ENCODE measurements at regions of chr11 and their contacts with region 1.

Region 1: DNA sequence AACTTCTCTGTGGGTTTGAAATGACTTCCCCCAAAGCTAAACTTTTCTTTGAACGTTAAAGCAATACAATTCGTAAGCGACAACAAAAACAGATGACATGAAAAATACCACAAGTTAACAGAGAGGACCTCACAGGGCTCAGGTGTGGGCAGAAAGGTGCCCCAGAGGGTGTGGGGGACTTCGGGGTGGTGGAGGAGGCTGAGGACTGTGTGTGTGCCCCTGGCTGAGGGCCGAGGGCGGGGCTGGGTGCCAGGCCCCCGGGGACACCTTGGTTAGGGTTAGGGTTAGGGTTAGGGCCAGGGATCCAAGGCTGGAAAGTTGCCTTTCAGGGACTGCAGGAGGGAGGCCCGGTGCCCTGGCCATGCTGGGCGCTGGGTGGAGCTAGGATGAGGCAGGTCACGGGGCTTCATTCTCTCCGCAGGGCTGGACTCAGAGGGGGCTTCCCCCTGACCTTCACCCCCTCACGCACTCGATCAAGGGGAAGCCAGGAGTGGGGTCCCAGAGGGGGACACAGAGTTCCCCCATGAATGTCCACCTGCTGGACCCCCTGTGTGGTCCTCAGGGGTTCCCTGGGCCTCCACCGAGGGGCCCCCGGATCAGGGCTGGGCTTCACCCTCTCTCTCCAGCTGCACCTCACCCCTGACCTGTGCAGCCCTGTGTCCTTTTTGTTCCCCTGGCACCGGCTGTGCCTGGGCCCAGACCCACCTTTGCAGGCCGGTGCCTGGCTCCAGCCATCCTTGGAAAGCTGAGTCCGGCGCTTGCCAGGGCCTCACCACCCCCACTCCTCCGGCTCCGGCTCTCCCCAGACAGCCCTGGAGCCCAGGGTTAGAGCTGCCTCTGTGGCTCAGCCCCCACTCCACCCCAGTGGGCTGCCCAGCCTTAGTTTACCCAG is 7.0 kb downstream of the TNNI2 start:
- DNase-seq: no peak
- CTCF ChIP-seq: no peak

Region 2: GRCh38 chr11:1782831-1783724 is 62.7 kb before region 1 on chr11:
- CTCF ChIA-PET with region 1: no interaction called
- POLR2A ChIA-PET with region 1: no interaction called
- DNase-seq: no peak
- CTCF ChIP-seq: no peak

Region 3: GRCh38 chr11:1832211-1832919 is 13.4 kb before region 1 on chr11:
- CTCF ChIA-PET with region 1: interaction called, 29 read pairs
- POLR2A ChIA-PET with region 1: no interaction called
- DNase-seq: peak; percentile 87
- CTCF ChIP-seq: peak; percentile 83

Region 4: DNA sequence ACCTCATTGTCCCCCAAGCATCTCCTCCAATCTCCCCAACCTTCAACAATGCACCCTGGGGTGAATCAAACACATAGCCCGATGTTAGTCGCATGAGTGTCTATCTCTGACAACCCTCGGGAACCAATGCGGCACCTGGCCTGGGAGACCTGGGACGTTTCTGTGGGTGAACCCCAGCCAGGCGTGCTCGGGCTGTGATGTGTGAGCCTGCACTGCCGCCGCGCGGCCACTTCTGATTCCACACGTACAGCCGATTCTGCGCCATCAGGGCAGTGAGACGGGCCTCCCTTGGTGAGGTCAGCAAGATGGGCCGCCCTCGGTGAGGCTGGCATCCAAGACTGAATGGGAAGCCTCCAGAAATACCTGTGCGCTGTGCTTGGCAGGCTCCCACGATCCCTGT is 157.0 kb after region 1 on chr11:
- CTCF ChIA-PET with region 1: interaction called, 37 read pairs
- POLR2A ChIA-PET with region 1: no interaction called
- DNase-seq: no peak
- CTCF ChIP-seq: no peak